Heart left ventricle (tissue), 16 donors: ENCODE measurements at regions of chr9 and their contacts with region 1.

Region 1: DNA sequence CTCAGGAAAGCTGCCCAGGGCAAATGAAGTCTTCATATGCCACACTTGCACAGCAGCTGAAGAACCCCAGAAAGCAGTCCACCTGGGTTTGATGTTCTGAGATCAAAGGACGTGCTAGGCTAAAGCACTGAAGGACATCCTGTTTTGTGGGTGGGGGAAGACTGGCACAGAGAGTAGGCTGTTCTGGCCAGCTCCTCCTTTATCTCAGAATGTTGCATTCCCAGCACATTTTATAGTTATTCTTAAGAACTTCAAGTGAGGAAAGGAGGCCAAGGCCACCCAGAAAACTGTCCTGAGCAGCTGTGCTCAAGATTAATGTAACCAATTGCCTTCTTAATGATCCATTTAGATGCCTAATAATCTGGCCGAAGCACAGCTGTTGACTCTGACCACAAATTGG is 10.9 kb downstream of the SHOC1 start:
- DNase-seq: no peak
- ATAC-seq: no peak
- H3K4me3 ChIP-seq: no peak overlapping the region
- H3K27ac ChIP-seq: no peak overlapping the region
- H3K4me1 ChIP-seq: no peaks in the 10 kb centered on the region
- H3K27me3 ChIP-seq: no peaks in the 10 kb centered on the region
- CTCF ChIP-seq: no peak
- POLR2A ChIP-seq: no peak

Region 2: DNA sequence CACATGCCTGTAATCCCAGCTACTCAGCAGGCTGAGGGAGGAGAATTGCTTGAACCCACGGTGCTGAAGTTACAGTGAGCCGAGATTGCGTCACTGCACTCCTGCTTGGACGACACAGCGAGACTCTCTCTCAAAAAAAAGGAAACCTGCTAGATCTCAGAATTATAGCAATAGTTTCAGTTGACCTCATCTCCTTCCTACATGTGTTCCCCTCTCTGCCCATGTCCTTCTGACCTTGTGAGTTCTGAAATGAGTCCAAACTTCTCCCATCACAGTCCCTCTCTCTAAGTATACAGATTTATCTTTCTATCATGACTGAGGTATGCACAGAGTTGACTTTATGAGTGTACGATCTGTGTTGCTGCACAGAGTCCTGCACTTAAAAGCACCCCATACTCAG is 55.5 kb after region 1 on chr9:
- intact Hi-C with region 1: loop called in 1 of 10 experiments (anchors 10 kb)
- DNase-seq: peak in 1 of 5 donors; percentile 34
- ATAC-seq: peak in 2 of 4 donors; percentile 10 to 45
- H3K4me3 ChIP-seq: no peak overlapping the region
- H3K27ac ChIP-seq: no peak overlapping the region
- H3K4me1 ChIP-seq: peaks cover 0 to 25% (median 0%) of the 10 kb centered on the region in 12 donors
- H3K27me3 ChIP-seq: no peaks in the 10 kb centered on the region
- CTCF ChIP-seq: no peak
- POLR2A ChIP-seq: no peak